AG04450 (cell line): ENCODE measurements at regions of chr11 and their contacts with region 1.

Region 1: GRCh38 chr11:126140932-126141291 is 70.5 kb downstream of the RPUSD4 start:
- DNase-seq: no peak
- H3K4me3 ChIP-seq: no peak overlapping the region
- H3K27ac ChIP-seq: peak overlapping the region; percentile 21
- H3K27me3 ChIP-seq: peaks cover 47% of the 10 kb centered on the region
- CTCF ChIP-seq: no peak

Region 2: DNA sequence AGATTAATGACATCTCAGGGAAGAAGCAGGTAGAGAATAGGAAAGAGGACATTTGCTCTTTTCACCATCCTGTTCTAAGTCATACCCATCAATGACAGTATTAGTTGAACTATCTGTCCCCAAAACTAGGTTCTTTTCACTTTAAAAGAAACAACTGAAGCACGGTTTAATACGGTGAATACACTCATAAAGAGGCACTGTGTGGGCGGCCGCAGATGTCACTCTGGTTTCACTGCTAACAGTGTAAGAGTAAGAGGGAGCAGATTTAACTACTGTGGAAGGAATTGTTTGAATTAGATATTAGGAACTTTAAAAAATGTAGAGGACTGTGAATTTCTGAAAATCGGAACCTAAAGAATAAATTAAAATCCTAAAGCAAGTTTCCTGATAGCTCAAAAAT is 145.6 kb before region 1 on chr11:
- CTCF ChIA-PET with region 1: no interaction called
- POLR2A ChIA-PET with region 1: no interaction called
- DNase-seq: no peak
- H3K4me3 ChIP-seq: no peak overlapping the region
- H3K27ac ChIP-seq: no peak overlapping the region
- H3K27me3 ChIP-seq: peaks cover 3% of the 10 kb centered on the region
- CTCF ChIP-seq: no peak

Region 3: DNA sequence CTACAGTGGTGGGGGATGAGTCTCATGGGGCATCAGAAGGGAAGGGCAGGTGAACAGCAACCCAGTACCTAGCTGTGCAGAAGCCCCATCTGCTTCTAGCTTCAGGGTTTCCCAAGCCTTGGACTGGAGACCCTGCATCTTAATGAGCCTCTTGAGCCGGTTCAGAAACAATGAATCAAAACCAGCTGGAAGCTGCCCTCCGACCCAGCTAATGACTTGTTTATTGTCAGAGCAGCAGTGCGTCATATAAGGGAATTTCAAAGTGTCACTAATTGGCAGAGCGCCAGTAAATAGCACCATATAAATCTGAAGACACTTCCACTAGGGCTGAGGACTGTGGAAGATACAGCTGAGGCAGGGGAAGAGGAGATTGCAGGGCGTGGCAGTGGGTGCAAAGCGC is 13.1 kb after region 1 on chr11:
- CTCF ChIA-PET with region 1: no interaction called
- POLR2A ChIA-PET with region 1: interaction called, 11 read pairs
- DNase-seq: no peak
- H3K4me3 ChIP-seq: no peak overlapping the region
- H3K27ac ChIP-seq: no peak overlapping the region
- H3K27me3 ChIP-seq: peaks cover 43% of the 10 kb centered on the region
- CTCF ChIP-seq: no peak